ENCODE measurements at regions of chr7 and their contacts with region 1.

Region 1: GRCh38 chr7:138002096-138002827 is 376 bp upstream of the CREB3L2 start:
- DNase-seq: peak; percentile 99
- ATAC-seq: peak; percentile 97

Region 2: GRCh38 chr7:137943147-137943551 is 59.1 kb before region 1 on chr7:
- intact Hi-C with region 1: loop called (anchors 5 kb)
- DNase-seq: no peak
- ATAC-seq: peak; percentile 94

Region 3: GRCh38 chr7:137958470-137959431 is 43.5 kb before region 1 on chr7:
- intact Hi-C with region 1: loop called (anchors 5 kb)
- DNase-seq: no peak
- ATAC-seq: no peak

Measured in Right ventricle myocardium inferior (tissue), 1 donor.